CD4-positive, alpha-beta T cell (primary cell): ENCODE measurements at regions of chr13 and their contacts with region 1.

Region 1: GRCh38 chr13:87052731-87053130 is 618.4 kb upstream of the SLITRK5 start:
- DNase-seq: no peak
- ATAC-seq: no peak
- H3K4me3 ChIP-seq: no peak overlapping the region
- H3K4me3 Mint-ChIP-seq: no peak overlapping the region
- H3K27ac ChIP-seq: no peak overlapping the region
- H3K27ac Mint-ChIP-seq: no peak overlapping the region
- H3K4me1 ChIP-seq: no peaks in the 10 kb centered on the region
- H3K4me1 Mint-ChIP-seq: no peaks in the 10 kb centered on the region
- H3K27me3 ChIP-seq: no peaks in the 10 kb centered on the region
- H3K27me3 Mint-ChIP-seq: no peaks in the 10 kb centered on the region
- CTCF ChIP-seq: no peak

Region 2: DNA sequence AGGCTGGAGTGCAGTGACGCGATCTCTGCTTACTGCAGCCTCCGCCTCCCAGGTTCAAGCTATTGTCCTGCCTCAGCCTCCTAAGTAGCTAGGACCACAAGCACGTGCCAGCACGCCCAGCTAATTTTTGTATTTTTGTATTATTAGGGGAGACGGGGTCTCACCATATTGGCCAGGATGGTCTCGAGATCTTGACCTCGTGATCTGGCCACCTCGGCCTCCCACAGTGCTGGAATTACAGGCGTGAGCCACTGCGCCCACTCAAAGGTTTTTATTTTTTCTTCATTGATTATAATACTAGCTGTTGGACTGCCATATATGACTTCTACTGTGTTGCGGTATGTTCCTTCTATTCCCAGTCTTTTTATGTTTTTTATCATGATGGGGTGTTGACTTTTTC is 683.8 kb before region 1 on chr13:
- CTCF ChIA-PET with region 1: no interaction called
- POLR2A ChIA-PET with region 1: no interaction called
- intact Hi-C with region 1: no loop called
- DNase-seq: no peak
- ATAC-seq: no peak
- H3K4me3 ChIP-seq: no peak overlapping the region
- H3K4me3 Mint-ChIP-seq: no peak overlapping the region
- H3K27ac ChIP-seq: no peak overlapping the region
- H3K27ac Mint-ChIP-seq: no peak overlapping the region
- H3K4me1 ChIP-seq: no peaks in the 10 kb centered on the region
- H3K4me1 Mint-ChIP-seq: no peaks in the 10 kb centered on the region
- H3K27me3 ChIP-seq: no peaks in the 10 kb centered on the region
- H3K27me3 Mint-ChIP-seq: no peaks in the 10 kb centered on the region
- CTCF ChIP-seq: no peak

Region 3: DNA sequence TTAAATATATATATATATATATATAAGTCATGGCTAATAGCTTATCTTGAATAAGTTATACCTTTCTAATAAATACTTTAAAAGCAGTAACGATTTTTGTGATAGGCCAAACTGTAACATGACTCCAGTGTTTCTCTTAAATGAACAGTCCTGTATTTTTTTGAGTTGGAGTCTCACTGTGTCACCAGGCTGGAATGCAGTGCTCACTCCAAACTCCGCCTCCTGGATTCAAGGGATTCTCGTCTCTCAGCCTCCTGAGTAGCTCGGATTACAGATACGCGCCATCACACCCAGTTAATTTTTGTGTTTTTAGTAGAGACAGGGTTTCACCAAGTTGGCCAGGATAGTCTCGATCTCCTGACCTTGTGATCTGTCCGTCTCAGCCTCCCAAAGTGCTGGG is 195.7 kb before region 1 on chr13:
- CTCF ChIA-PET with region 1: no interaction called
- POLR2A ChIA-PET with region 1: no interaction called
- intact Hi-C with region 1: no loop called
- DNase-seq: no peak
- ATAC-seq: no peak
- H3K4me3 ChIP-seq: no peak overlapping the region
- H3K4me3 Mint-ChIP-seq: no peak overlapping the region
- H3K27ac ChIP-seq: no peak overlapping the region
- H3K27ac Mint-ChIP-seq: no peak overlapping the region
- H3K4me1 ChIP-seq: no peaks in the 10 kb centered on the region
- H3K4me1 Mint-ChIP-seq: no peaks in the 10 kb centered on the region
- H3K27me3 ChIP-seq: no peaks in the 10 kb centered on the region
- H3K27me3 Mint-ChIP-seq: no peaks in the 10 kb centered on the region
- CTCF ChIP-seq: no peak

Region 4: GRCh38 chr13:88223958-88224357 is 1171.2 kb after region 1 on chr13:
- CTCF ChIA-PET with region 1: no interaction called
- POLR2A ChIA-PET with region 1: no interaction called
- intact Hi-C with region 1: loop called in 1 of 2 experiments (anchors 5 kb)
- DNase-seq: no peak
- ATAC-seq: no peak
- H3K4me3 ChIP-seq: no peak overlapping the region
- H3K4me3 Mint-ChIP-seq: no peak overlapping the region
- H3K27ac ChIP-seq: no peak overlapping the region
- H3K27ac Mint-ChIP-seq: no peak overlapping the region
- H3K4me1 ChIP-seq: no peaks in the 10 kb centered on the region
- H3K4me1 Mint-ChIP-seq: no peaks in the 10 kb centered on the region
- H3K27me3 ChIP-seq: no peaks in the 10 kb centered on the region
- H3K27me3 Mint-ChIP-seq: no peaks in the 10 kb centered on the region
- CTCF ChIP-seq: no peak